ENCODE measurements at regions of chr2 and their contacts with region 1.

Region 1: GRCh38 chr2:28751252-28751955 is at the start of gene PPP1CB:
- DNase-seq: peak; percentile 59 to 91
- H3K4me3 ChIP-seq: peak within 1 kb of the TSS; percentile 84 to 96 (median 91)
- H3K27ac ChIP-seq: peak within 1 kb of the TSS; percentile 97
- H3K4me1 ChIP-seq: peaks cover 3 to 8% (median 4%) of the 10 kb centered on the region in 4 experiments; a peak in 5 of 7 replicates
- H3K27me3 ChIP-seq: no peaks in the 10 kb centered on the region
- CTCF ChIP-seq: peak in 2 of 3 experiments; percentile 8 to 10; a peak in 2 of 4 replicates
- EP300 ChIP-seq: 0 out of 3 replicates have a peak, but pooled peaks of 1 of the 2 experiments have one; percentile 30
- POLR2A ChIP-seq: peak in 1 of 2 experiments; percentile 80; a peak in 2 of 3 replicates
- RAD21 ChIP-seq: peak in 1 of 2 experiments; percentile 1; a peak in 1 of 4 replicates
- total RNA-seq, gene PPP1CB: 158 and 165 TPM in 2 replicates

Region 2: DNA sequence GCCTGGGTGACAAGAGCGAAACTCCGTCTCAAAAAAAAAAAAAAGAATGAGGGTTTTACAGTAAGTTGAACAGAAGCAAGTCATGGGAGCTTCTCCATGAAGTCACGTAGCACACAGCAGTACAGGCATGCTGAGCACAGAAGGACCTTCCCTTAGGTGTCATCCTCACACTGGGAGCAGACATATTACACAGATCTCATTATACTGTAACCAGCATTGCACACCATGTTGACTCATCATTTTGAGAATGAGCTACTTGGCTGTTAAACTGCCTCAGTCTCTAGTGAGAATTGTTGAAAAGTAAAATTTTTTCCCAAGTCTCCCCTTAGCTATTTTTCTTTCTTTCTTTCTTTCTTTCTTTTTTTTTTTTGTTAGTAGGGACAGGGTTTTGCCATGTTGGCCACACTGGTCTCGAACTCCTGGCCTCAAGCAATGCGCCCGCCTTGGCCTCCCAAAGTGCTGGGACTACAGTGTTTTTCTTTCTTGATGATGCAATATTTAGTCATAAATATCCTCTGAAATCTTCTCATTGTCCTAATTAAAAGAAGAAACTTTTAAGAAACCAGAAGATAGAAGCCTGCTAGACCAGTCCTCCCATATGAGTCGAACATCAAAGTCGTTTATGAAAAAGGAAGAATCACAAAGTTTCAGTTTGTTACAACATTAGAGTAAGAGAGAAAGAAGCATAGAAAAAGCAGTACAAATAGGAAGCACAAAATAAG is 37.7 kb before region 1 on chr2:
- CTCF ChIA-PET with region 1: no interaction called
- POLR2A ChIA-PET with region 1: no interaction called
- DNase-seq: no peak
- H3K4me3 ChIP-seq: no peak overlapping the region
- H3K27ac ChIP-seq: no peak overlapping the region
- H3K4me1 ChIP-seq: no peaks in the 10 kb centered on the region
- H3K27me3 ChIP-seq: no peaks in the 10 kb centered on the region
- CTCF ChIP-seq: no peak
- EP300 ChIP-seq: no peak
- POLR2A ChIP-seq: no peak
- RAD21 ChIP-seq: no peak

Region 3: DNA sequence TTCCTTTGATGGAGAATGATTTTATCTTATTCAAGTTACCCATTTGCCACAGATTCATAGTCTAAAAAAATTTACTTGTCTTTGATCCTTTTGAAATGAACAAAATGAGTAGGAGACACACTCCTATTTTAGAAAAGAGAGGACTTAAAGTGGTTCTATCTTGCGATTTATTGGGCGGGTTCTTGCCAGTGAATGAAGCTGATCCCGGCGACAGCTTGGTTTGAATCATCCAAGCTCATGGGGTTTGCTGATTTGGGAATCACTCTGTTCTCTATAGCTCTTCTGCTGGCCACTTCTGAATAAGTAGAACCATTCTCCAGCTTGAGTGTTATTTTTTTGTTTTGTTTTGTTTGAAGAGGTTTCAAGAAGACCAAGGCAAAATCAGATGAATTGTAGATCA is 25.2 kb before region 1 on chr2:
- CTCF ChIA-PET with region 1: no interaction called
- POLR2A ChIA-PET with region 1: interaction called, 10 read pairs
- DNase-seq: no peak
- H3K4me3 ChIP-seq: no peak overlapping the region
- H3K27ac ChIP-seq: no peak overlapping the region
- H3K4me1 ChIP-seq: peaks cover 0 to 3% (median 0%) of the 10 kb centered on the region in 4 experiments; a peak in 1 of 7 replicates
- H3K27me3 ChIP-seq: no peaks in the 10 kb centered on the region
- CTCF ChIP-seq: no peak
- EP300 ChIP-seq: no peak
- POLR2A ChIP-seq: no peak
- RAD21 ChIP-seq: no peak

Region 4: GRCh38 chr2:28761420-28761819 is 10.0 kb after region 1 on chr2:
- CTCF ChIA-PET with region 1: interaction called, 3 read pairs
- POLR2A ChIA-PET with region 1: interaction called, 15 read pairs
- DNase-seq: no peak
- H3K4me3 ChIP-seq: no peak overlapping the region
- H3K27ac ChIP-seq: no peak overlapping the region
- H3K4me1 ChIP-seq: peaks cover 0 to 2% (median 0%) of the 10 kb centered on the region in 4 experiments; a peak in 1 of 7 replicates
- H3K27me3 ChIP-seq: no peaks in the 10 kb centered on the region
- CTCF ChIP-seq: no peak
- EP300 ChIP-seq: no peak
- POLR2A ChIP-seq: no peak
- RAD21 ChIP-seq: no peak